ENCODE measurements at regions of chr14 and their contacts with region 1.

Region 1: DNA sequence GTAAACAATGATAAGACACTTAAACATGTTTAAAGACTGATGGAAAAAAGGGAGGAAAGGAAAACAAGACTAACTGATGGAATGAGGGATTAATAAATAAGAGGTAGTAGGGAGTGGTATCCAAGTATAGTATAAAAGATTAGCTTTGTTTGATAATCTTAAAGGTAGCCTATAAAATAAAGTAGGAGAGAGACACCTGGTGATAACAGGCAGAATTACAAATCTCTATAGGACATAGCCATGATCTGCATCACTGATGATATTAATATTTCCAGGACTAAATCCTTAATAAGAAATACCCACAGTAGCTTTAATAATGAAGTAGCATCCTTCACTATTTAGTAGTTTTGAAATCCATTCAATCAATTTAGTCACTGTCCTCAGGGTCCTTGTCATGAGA is 30.4 kb downstream of the DLGAP5 start:
- DNase-seq: no peak
- ATAC-seq: peak; percentile 58 to 69 (median 62)
- H3K4me3 ChIP-seq: no peak overlapping the region
- H3K27ac ChIP-seq: no peak overlapping the region
- H3K4me1 ChIP-seq: peaks cover 0 to 5% (median 0%) of the 10 kb centered on the region in 12 donors
- H3K27me3 ChIP-seq: no peaks in the 10 kb centered on the region
- CTCF ChIP-seq: peak; percentile 52 to 80 (median 67)
- POLR2A ChIP-seq: no peak

Region 2: GRCh38 chr14:53278930-53279506 is 1882.0 kb before region 1 on chr14:
- intact Hi-C with region 1: no loop called
- DNase-seq: no peak
- ATAC-seq: peak in 1 of 4 donors; percentile 28
- H3K4me3 ChIP-seq: no peak overlapping the region
- H3K27ac ChIP-seq: no peak overlapping the region
- H3K4me1 ChIP-seq: no peaks in the 10 kb centered on the region
- H3K27me3 ChIP-seq: no peaks in the 10 kb centered on the region
- CTCF ChIP-seq: no peak
- POLR2A ChIP-seq: no peak

Region 3: DNA sequence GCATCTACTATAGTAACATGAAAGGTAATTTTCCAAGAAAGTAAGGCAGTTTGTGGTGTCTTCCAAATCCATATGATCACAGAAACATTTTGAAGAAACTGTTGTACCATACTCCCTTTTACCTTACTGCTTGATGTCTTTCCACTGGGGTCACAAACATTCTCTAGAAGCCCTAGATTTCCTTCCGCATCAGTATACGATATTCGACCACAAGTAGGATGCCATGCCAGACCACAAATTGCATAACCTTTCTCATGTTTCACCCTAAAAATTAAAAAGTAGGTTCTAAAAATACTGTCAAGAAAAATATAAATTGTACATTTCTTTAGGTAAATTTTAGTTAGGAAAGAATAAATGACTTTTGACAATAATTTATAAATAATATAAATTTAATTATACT is 160.6 kb before region 1 on chr14:
- intact Hi-C with region 1: no loop called
- DNase-seq: no peak
- ATAC-seq: no peak
- H3K4me3 ChIP-seq: no peak overlapping the region
- H3K27ac ChIP-seq: no peak overlapping the region
- H3K4me1 ChIP-seq: peaks cover 0 to 5% (median 0%) of the 10 kb centered on the region in 12 donors
- H3K27me3 ChIP-seq: no peaks in the 10 kb centered on the region
- CTCF ChIP-seq: no peak
- POLR2A ChIP-seq: no peak

Region 4: GRCh38 chr14:55088356-55088755 is 72.6 kb before region 1 on chr14:
- intact Hi-C with region 1: loop called in 9 of 10 experiments (anchors 1 to 2 kb)
- DNase-seq: no peak
- ATAC-seq: peak in 1 of 4 donors; percentile 46
- H3K4me3 ChIP-seq: no peak overlapping the region
- H3K27ac ChIP-seq: no peak overlapping the region
- H3K4me1 ChIP-seq: peaks cover 0 to 20% (median 0%) of the 10 kb centered on the region in 12 donors
- H3K27me3 ChIP-seq: no peaks in the 10 kb centered on the region
- CTCF ChIP-seq: no peak
- POLR2A ChIP-seq: no peak

Region 5: DNA sequence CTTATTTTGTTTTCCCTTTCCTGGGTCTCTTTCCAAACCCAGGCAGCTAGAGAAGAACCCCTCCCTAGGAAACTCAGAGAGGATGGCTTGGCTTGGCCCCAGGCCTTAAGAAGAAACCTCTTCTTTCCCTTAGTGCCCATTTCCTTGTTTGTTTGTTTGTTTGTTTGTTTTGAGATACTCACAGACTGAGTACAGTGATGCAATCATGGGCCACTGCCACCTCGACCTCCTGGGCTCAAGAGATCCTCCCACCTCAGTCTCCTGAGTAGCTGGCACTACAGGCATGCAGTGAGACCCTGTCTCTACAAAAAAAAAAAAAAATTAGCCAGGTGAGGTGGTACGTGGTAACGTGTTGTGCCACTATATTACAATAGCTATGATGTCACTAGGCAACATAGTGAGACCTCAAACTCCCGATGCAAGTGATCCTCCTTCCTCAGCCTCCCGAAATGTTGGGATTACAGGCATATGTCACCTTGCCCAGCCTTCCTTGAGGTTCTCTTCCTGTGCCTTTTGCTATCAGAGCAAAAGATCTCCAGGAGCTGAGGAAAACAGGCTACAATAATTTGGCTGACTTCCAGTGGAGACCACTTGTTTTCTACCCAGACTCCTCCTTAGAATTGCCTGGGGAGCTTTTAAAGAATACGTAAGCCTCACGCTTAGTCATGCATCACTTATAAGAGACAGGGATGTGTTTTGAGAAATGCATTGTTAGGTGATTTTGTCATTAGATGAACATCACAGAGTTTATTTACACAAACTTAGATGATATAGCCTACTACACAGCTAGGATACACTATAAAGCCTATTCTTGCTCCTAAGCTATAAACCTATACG is 66.5 kb before region 1 on chr14:
- intact Hi-C with region 1: loop called (anchors 1 to 2 kb)
- DNase-seq: no peak
- ATAC-seq: no peak
- H3K4me3 ChIP-seq: no peak overlapping the region
- H3K27ac ChIP-seq: no peak overlapping the region
- H3K4me1 ChIP-seq: peaks cover 0 to 37% (median 12%) of the 10 kb centered on the region in 12 donors
- H3K27me3 ChIP-seq: no peaks in the 10 kb centered on the region
- CTCF ChIP-seq: no peak
- POLR2A ChIP-seq: no peak

Region 6: DNA sequence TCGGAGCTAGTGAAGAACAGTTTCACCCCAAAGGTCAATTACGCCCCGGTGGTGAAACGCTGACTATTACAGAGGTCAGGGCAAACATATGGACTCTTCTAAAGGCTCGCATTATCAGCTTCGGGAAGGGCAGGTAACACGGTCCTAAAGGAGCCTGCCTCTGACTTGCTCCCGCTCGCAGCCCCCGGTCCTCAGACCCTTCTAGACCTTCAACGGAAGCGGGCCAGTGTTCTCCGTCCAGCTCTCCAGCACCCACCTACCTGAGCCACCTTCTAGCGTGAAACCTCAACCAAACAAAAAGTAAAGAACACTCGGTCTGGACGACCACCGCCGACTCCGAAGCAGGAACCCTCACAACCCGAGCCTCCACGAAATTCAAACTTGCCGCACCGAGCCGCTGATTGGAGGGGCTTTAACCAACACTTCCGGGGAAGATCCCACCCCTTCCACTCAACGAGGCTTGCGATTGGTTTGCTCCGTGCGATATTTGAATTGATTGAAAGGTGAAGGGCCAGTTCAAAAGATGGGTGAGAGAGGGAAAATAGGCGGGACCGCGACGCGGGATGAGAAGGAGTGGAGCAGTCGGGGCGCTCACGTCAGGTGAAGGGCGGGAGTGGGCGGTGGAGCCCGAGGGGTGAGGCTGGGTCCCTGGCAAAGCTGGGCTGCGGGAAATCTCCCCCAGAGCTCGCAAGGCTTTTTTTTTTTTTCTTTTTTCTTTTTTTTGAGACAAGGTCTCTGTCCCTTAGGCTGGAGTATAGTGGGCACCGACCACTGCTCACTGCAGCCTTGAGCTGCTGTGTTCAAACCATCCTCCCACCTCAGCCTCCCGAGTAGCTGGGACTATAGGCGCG is 30.4 kb after region 1 on chr14 and contains the start of gene DLGAP5:
- intact Hi-C with region 1: no loop called
- DNase-seq: peak; percentile 92 to 94 (median 93)
- ATAC-seq: peak; percentile 97 to 100 (median 99)
- H3K4me3 ChIP-seq: peak within 1 kb of the TSS; percentile 24 to 76 (median 64)
- H3K27ac ChIP-seq: peak within 1 kb of the TSS in 8 of 12 donors; percentile 7 to 73 (median 57)
- H3K4me1 ChIP-seq: peaks cover 0 to 13% (median 5%) of the 10 kb centered on the region in 12 donors
- H3K27me3 ChIP-seq: no peaks in the 10 kb centered on the region
- CTCF ChIP-seq: no peak
- POLR2A ChIP-seq: peak in 1 of 2 donors; percentile 33
- total RNA-seq, gene DLGAP5: 0.12 to 11.1 (median 0.65) TPM in 7 of 9 donors, not detected in the others

Measured in heart left ventricle (tissue), 16 donors.